B cell (primary cell): ENCODE measurements at regions of chr16 and their contacts with region 1.

Region 1: GRCh38 chr16:2919511-2920255 is 8.0 kb downstream of the FLYWCH1 start:
- DNase-seq: peak; percentile 80
- ATAC-seq: peak; percentile 69
- H3K4me3 ChIP-seq: no peak overlapping the region
- H3K4me3 Mint-ChIP-seq: no peak overlapping the region
- H3K27ac ChIP-seq: no peak overlapping the region
- H3K27ac Mint-ChIP-seq: no peak overlapping the region
- H3K4me1 ChIP-seq: peaks cover 0 to 3% of the 10 kb centered on the region in 2 donors
- H3K4me1 Mint-ChIP-seq: peaks cover 2% of the 10 kb centered on the region
- H3K27me3 ChIP-seq: no peaks in the 10 kb centered on the region
- H3K27me3 Mint-ChIP-seq: no peaks in the 10 kb centered on the region
- CTCF ChIP-seq: peak; percentile 96

Region 2: DNA sequence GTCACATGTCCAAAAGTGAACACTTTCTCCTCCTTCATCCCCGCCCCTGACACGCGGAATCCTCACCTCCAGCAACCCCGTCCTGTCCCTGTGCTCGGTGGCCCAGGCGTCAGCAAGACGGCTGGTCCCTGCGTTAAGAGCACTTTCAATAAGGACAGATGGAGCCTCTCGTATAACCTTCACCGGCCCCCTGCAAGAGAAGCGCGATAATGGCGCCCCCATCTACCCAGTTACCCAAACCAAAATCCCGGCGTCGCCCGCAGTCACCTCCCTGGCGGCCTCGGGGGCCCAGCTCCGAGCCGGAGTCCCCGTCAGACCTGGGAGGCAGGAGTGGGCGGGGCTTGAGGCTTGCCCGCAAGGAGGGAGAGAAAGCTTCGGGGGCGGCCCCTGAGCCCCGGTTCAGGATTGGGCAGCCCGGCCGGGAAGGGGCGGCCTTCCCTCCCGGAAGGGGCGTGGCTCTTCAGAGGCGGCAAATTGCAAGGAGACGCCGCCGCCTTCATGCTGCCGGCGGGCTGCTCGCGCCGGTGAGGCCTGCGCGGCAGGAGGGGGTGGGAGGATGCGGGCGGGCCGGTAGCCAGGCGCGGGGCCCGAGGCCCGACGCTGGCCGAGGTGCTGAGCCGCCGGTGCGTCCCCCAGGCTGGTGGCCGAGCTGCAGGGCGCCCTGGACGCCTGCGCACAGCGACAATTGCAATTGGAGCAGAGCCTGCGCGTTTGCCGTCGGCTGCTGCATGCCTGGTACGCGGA is 459.9 kb before region 1 on chr16 and contains the start of gene TEDC2:
- CTCF ChIA-PET with region 1: no interaction called
- POLR2A ChIA-PET with region 1: no interaction called
- intact Hi-C with region 1: no loop called
- DNase-seq: peak; percentile 96
- ATAC-seq: peak; percentile 100
- H3K4me3 ChIP-seq: peak within 1 kb of the TSS; percentile 17 to 84 (median 54)
- H3K4me3 Mint-ChIP-seq: peak within 1 kb of the TSS; percentile 94
- H3K27ac ChIP-seq: peak within 1 kb of the TSS in 1 of 2 donors; percentile 34
- H3K27ac Mint-ChIP-seq: peak within 1 kb of the TSS; percentile 68
- H3K4me1 ChIP-seq: peaks cover 10 to 16% of the 10 kb centered on the region in 2 donors
- H3K4me1 Mint-ChIP-seq: peaks cover 6% of the 10 kb centered on the region
- H3K27me3 ChIP-seq: no peaks in the 10 kb centered on the region
- H3K27me3 Mint-ChIP-seq: no peaks in the 10 kb centered on the region
- CTCF ChIP-seq: no peak
- total RNA-seq, gene TEDC2: 1.5 and 2.9 TPM in 2 replicates

Region 3: GRCh38 chr16:2905431-2906387 is 14.0 kb before region 1 on chr16:
- CTCF ChIA-PET with region 1: interaction called, 22 read pairs
- POLR2A ChIA-PET with region 1: no interaction called
- intact Hi-C with region 1: loop called (anchors 1 kb)
- DNase-seq: peak; percentile 95
- ATAC-seq: peak; percentile 75
- H3K4me3 ChIP-seq: peak overlapping the region; percentile 21 to 85 (median 74)
- H3K4me3 Mint-ChIP-seq: peak overlapping the region; percentile 93
- H3K27ac ChIP-seq: peak overlapping the region in 1 of 2 donors; percentile 22
- H3K27ac Mint-ChIP-seq: peak overlapping the region; percentile 84
- H3K4me1 ChIP-seq: peaks cover 10 to 28% of the 10 kb centered on the region in 2 donors
- H3K4me1 Mint-ChIP-seq: peaks cover 33% of the 10 kb centered on the region
- H3K27me3 ChIP-seq: no peaks in the 10 kb centered on the region
- H3K27me3 Mint-ChIP-seq: no peaks in the 10 kb centered on the region
- CTCF ChIP-seq: no peak

Region 4: DNA sequence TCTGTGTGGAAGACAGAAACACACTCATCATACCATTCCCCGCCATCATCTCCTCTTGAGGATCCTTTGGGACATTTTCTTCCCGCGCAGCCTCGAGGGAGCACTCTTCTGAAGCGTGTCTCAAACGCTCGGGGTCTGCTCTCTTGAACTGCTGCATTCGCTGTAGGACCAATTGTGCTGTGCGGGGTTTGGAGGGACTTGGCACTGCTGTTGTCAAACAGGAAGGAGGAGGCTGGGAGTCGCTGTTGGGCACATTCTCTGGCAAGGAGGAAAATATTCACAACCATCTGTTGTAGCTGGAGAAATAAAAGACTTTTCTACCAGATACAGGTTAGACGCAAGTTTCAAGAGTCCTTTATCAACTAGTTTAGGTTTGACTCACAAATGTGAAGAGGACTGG is 686.8 kb after region 1 on chr16:
- CTCF ChIA-PET with region 1: no interaction called
- POLR2A ChIA-PET with region 1: no interaction called
- intact Hi-C with region 1: no loop called
- DNase-seq: no peak
- ATAC-seq: no peak
- H3K4me3 ChIP-seq: no peak overlapping the region
- H3K4me3 Mint-ChIP-seq: no peak overlapping the region
- H3K27ac ChIP-seq: no peak overlapping the region
- H3K27ac Mint-ChIP-seq: no peak overlapping the region
- H3K4me1 ChIP-seq: peaks cover 17 to 25% of the 10 kb centered on the region in 2 donors
- H3K4me1 Mint-ChIP-seq: peaks cover 35% of the 10 kb centered on the region
- H3K27me3 ChIP-seq: no peaks in the 10 kb centered on the region
- H3K27me3 Mint-ChIP-seq: no peaks in the 10 kb centered on the region
- CTCF ChIP-seq: no peak

Region 5: GRCh38 chr16:3797904-3798811 is 878.5 kb after region 1 on chr16:
- CTCF ChIA-PET with region 1: no interaction called
- POLR2A ChIA-PET with region 1: no interaction called
- intact Hi-C with region 1: no loop called
- DNase-seq: no peak
- ATAC-seq: peak; percentile 31
- H3K4me3 ChIP-seq: peak overlapping the region in 1 of 5 experiments; percentile 32
- H3K4me3 Mint-ChIP-seq: peak overlapping the region; percentile 57
- H3K27ac ChIP-seq: peak overlapping the region; percentile 39 to 74
- H3K27ac Mint-ChIP-seq: peak overlapping the region; percentile 46
- H3K4me1 ChIP-seq: peaks cover 43 to 48% of the 10 kb centered on the region in 2 donors
- H3K4me1 Mint-ChIP-seq: peaks cover 72% of the 10 kb centered on the region
- H3K27me3 ChIP-seq: no peaks in the 10 kb centered on the region
- H3K27me3 Mint-ChIP-seq: no peaks in the 10 kb centered on the region
- CTCF ChIP-seq: no peak